PC-9 (cell line): ENCODE measurements at regions of chr1 and their contacts with region 1.

Region 1: GRCh38 chr1:211258756-211259637 is at the start of gene RCOR3:
- DNase-seq: peak; percentile 61 to 93
- H3K4me3 ChIP-seq: peak within 1 kb of the TSS; percentile 98
- H3K27ac ChIP-seq: peak within 1 kb of the TSS; percentile 79
- H3K4me1 ChIP-seq: peaks cover 20% of the 10 kb centered on the region
- H3K27me3 ChIP-seq: no peaks in the 10 kb centered on the region
- CTCF ChIP-seq: peak; percentile 63
- total RNA-seq, gene RCOR3: 42.1 and 48.7 TPM in 2 replicates

Region 2: GRCh38 chr1:210328746-210329503 is 930.1 kb before region 1 on chr1 and contains the start of gene HHAT:
- CTCF ChIA-PET with region 1: no interaction called
- POLR2A ChIA-PET with region 1: interaction called, 21 read pairs
- intact Hi-C with region 1: no loop called
- DNase-seq: peak; percentile 50 to 86
- H3K4me3 ChIP-seq: peak within 1 kb of the TSS; percentile 95
- H3K27ac ChIP-seq: peak within 1 kb of the TSS; percentile 53
- H3K4me1 ChIP-seq: peaks cover 18% of the 10 kb centered on the region; the same call in 1 of the 2 replicates
- H3K27me3 ChIP-seq: no peaks in the 10 kb centered on the region
- CTCF ChIP-seq: no peak
- total RNA-seq, gene HHAT: 5.3 and 10.9 TPM in 2 replicates

Region 3: DNA sequence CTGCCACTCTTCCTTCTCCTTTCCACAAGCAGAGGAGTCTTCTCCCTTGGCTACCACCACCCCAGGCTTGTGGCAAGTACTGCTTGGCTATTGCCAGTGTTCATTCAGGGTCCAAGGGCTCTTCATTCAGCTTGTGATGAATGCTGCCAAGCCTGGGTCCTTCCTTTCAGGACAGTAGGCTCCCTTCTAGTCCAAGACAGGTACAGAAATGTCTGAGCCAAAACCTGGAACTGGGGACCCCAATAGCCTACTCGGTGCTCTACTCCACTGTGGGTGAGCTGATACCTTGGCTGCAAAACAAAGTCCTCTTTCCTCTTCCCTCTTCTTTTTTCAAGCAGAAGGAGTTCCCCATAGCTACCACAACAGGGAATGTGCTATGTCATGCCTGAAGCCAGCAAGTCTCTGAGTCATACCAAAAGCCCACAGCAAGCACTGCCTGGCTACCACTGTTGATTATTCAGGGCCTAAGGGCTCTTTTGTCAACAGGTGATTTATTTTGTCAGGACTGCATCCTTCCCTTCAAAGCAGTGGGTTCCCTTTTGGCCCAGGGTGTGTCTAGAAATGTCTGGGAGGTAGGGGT is 661.4 kb before region 1 on chr1:
- CTCF ChIA-PET with region 1: no interaction called
- POLR2A ChIA-PET with region 1: interaction called, 4 read pairs
- intact Hi-C with region 1: loop called (anchors 5 kb)
- DNase-seq: peak; percentile 73 to 95
- H3K4me3 ChIP-seq: no peak overlapping the region; the same call in 1 of the 2 replicates
- H3K27ac ChIP-seq: peak overlapping the region; percentile 98
- H3K4me1 ChIP-seq: peaks cover 37% of the 10 kb centered on the region
- H3K27me3 ChIP-seq: no peaks in the 10 kb centered on the region
- CTCF ChIP-seq: no peak

Region 4: GRCh38 chr1:211735208-211736170 is 476.5 kb after region 1 on chr1:
- CTCF ChIA-PET with region 1: no interaction called
- POLR2A ChIA-PET with region 1: no interaction called
- intact Hi-C with region 1: loop called (anchors 5 kb)
- DNase-seq: peak; percentile 89 to 95
- H3K4me3 ChIP-seq: peak overlapping the region; percentile 24; the same call in 1 of the 2 replicates
- H3K27ac ChIP-seq: peak overlapping the region; percentile 72
- H3K4me1 ChIP-seq: peaks cover 45% of the 10 kb centered on the region
- H3K27me3 ChIP-seq: no peaks in the 10 kb centered on the region
- CTCF ChIP-seq: no peak